Heart left ventricle (tissue), 16 donors: ENCODE measurements at regions of chr11 and their contacts with region 1.

Region 1: DNA sequence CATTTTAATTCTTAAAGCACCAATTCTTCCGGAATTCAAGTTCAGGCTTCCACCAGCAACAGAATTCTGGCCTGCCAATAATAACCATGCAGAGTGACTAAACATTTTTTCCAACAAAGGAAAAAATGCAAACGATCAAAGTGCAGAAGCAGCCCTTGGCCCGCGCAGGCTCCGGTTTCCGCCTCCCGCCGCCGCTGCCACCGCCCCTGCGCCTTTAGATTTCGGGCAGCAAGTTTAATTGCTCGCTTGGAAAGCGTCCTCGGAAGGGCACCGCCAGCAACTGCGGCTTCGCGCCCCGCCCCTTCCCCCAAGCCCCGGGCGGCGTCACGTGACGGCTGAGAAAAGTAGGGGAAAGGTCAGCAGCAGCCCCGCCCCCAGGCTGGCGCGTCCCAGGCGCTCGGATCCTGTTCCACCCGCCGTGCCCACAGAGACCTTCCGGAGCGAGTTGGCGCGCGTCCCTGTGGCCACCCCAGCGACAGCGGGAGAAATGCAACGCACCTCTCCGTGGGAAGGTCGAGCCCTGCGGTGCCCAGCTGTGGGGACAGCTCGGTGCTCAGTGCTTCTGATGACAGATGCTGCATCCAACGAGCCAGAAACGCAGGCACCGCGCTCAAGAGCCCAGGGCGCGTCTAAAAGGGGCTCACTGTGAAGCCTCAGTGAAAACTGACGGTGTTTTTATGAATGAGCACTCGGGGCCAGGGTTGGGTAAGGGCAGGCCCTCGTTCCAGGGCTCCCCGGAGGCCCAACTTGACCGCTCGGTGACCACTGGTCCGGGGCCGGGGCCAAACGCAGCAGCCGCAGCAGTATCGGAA is 2.5 kb downstream of the CPT1A start:
- DNase-seq: peak; percentile 95 to 98 (median 97)
- ATAC-seq: peak; percentile 82 to 92 (median 87)
- H3K4me3 ChIP-seq: peak overlapping the region; percentile 21 to 96 (median 88)
- H3K27ac ChIP-seq: peak overlapping the region; percentile 86 to 97 (median 94)
- H3K4me1 ChIP-seq: peaks cover 11 to 91% (median 72%) of the 10 kb centered on the region in 12 donors
- H3K27me3 ChIP-seq: no peaks in the 10 kb centered on the region
- CTCF ChIP-seq: no peak
- POLR2A ChIP-seq: peak in 1 of 2 donors; percentile 56

Region 2: GRCh38 chr11:68780829-68781228 is 58.4 kb before region 1 on chr11:
- intact Hi-C with region 1: loop called in 2 of 10 experiments (anchors 2 to 5 kb)
- DNase-seq: peak; percentile 55 to 83 (median 80)
- ATAC-seq: peak; percentile 54 to 85 (median 77)
- H3K4me3 ChIP-seq: no peak overlapping the region
- H3K27ac ChIP-seq: peak overlapping the region in 6 of 12 donors; percentile 18 to 55 (median 46)
- H3K4me1 ChIP-seq: peaks cover 0 to 36% (median 5%) of the 10 kb centered on the region in 12 donors
- H3K27me3 ChIP-seq: no peaks in the 10 kb centered on the region
- CTCF ChIP-seq: no peak
- POLR2A ChIP-seq: no peak

Region 3: GRCh38 chr11:68798221-68798813 is 40.9 kb before region 1 on chr11:
- intact Hi-C with region 1: loop called in 1 of 10 experiments (anchors 5 kb)
- DNase-seq: no peak
- ATAC-seq: peak in 2 of 4 donors; percentile 20 to 49
- H3K4me3 ChIP-seq: no peak overlapping the region
- H3K27ac ChIP-seq: no peak overlapping the region
- H3K4me1 ChIP-seq: peaks cover 0 to 5% (median 0%) of the 10 kb centered on the region in 12 donors
- H3K27me3 ChIP-seq: no peaks in the 10 kb centered on the region
- CTCF ChIP-seq: peak; percentile 31 to 65 (median 55)
- POLR2A ChIP-seq: no peak

Region 4: DNA sequence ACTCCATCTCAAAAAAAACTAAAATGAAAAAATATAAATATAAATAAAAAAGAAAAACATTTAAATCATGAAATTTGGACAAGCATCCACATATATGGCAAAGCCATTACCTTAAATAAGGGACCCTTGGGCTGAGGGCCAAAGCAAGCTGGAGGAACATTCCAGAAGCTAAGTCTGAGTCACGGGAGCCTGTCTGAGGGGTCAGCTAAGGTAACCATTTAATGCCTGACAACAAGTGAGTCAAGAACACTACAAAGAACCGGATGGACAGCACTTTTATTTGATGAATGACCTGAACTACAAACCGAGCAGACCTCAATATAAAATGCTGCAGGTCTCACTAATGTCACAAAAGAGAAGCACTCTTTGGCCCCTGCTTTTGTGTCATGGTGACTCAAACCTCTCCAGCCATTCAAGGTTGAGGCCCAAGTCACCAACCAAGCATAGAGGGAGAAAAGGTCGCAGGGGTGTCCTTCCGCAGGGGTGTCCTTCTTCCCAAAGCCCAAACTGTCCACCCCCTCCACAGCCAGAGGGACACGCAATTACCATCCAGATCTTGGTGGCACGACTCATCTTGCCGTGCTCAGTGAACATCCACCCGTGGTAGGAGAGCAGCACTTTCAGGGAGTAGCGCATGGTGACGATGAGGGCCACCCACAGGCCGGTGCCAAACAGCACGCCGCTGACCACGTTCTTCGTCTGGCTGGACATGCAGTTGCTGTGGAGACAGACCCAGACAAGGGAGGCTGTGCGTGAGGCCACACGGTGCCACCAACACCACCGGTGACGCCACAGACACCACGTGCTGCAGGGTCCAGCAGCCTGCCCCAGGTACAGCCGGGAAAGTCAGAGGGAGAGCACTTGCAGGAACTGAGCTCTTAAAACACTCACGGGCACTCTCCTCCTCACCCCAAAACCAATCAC is 32.1 kb before region 1 on chr11:
- intact Hi-C with region 1: loop called in 1 of 10 experiments (anchors 5 kb)
- DNase-seq: no peak
- ATAC-seq: peak in 1 of 4 donors; percentile 30
- H3K4me3 ChIP-seq: no peak overlapping the region
- H3K27ac ChIP-seq: no peak overlapping the region
- H3K4me1 ChIP-seq: peaks cover 0 to 20% (median 13%) of the 10 kb centered on the region in 12 donors
- H3K27me3 ChIP-seq: no peaks in the 10 kb centered on the region
- CTCF ChIP-seq: no peak
- POLR2A ChIP-seq: no peak

Region 5: GRCh38 chr11:68889948-68890446 is 50.7 kb after region 1 on chr11:
- intact Hi-C with region 1: loop called in 5 of 10 experiments (anchors 1 to 5 kb)
- DNase-seq: peak in 4 of 5 donors; percentile 70 to 81 (median 78)
- ATAC-seq: peak; percentile 30 to 84 (median 59)
- H3K4me3 ChIP-seq: no peak overlapping the region
- H3K27ac ChIP-seq: peak overlapping the region; percentile 26 to 90 (median 81)
- H3K4me1 ChIP-seq: peaks cover 6 to 32% (median 18%) of the 10 kb centered on the region in 12 donors
- H3K27me3 ChIP-seq: no peaks in the 10 kb centered on the region
- CTCF ChIP-seq: peak in 10 of 12 donors; percentile 14 to 66 (median 46)
- POLR2A ChIP-seq: no peak

Region 6: GRCh38 chr11:68903288-68904247 is 64.3 kb after region 1 on chr11 and contains the starts of genes IGHMBP2 and MRPL21:
- intact Hi-C with region 1: loop called in 1 of 10 experiments (anchors 5 kb)
- DNase-seq: peak; percentile 82 to 92 (median 87)
- ATAC-seq: peak; percentile 84 to 96 (median 96)
- H3K4me3 ChIP-seq: peak within 1 kb of the TSS; percentile 73 to 96 (median 86)
- H3K27ac ChIP-seq: peak within 1 kb of the TSS; percentile 39 to 93 (median 86)
- H3K4me1 ChIP-seq: peaks cover 10 to 45% (median 28%) of the 10 kb centered on the region in 12 donors
- H3K27me3 ChIP-seq: no peaks in the 10 kb centered on the region
- CTCF ChIP-seq: peak in 1 of 12 donors; percentile 15
- POLR2A ChIP-seq: peak in 1 of 2 donors; percentile 73
- total RNA-seq, gene IGHMBP2: 8.3 to 18.9 (median 13.7) TPM
- total RNA-seq, gene MRPL21: 59.9 to 120 (median 87.9) TPM

Region 7: GRCh38 chr11:68974421-68975194 is 135.3 kb after region 1 on chr11:
- intact Hi-C with region 1: no loop called
- DNase-seq: no peak
- ATAC-seq: peak in 2 of 4 donors; percentile 34 to 57
- H3K4me3 ChIP-seq: no peak overlapping the region
- H3K27ac ChIP-seq: no peak overlapping the region
- H3K4me1 ChIP-seq: peaks cover 0 to 28% (median 9%) of the 10 kb centered on the region in 12 donors
- H3K27me3 ChIP-seq: peaks cover 0 to 6% (median 0%) of the 10 kb centered on the region in 9 donors
- CTCF ChIP-seq: no peak
- POLR2A ChIP-seq: no peak